Adrenal gland (tissue), 19 donors: ENCODE measurements at regions of chr6 and their contacts with region 1.

Region 1: DNA sequence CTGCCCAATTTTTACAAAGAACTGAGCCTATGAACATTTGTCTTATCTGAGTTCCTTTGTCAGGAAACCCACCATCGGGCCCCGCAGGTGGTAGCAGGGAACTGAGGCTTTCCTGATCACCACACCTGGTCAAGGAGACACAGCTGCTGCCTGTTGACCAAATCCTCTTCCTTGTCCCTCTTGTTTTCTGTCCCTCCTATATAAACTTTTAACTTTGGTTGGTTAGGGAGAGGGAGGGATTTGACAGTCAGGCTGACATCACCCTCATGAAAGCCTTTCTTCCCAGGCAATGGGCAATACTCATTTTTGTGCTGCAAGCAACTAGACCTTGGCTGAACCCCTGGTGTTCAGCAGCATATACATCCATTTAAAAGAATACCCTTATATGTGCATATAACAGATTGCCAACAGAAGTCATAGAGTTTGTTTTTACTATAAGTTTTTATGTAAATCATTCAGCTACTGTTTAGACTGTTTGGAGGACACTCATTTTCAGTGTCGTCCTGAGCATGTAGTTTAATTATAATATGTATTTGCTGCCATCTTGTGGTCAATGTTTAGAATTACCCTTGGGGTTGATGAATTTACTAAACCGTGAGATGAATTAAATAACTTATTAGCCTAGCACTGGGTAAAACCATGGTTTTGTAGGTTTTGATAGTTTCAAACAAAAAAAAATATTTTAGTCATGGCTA is 17.0 kb downstream of the CRISP1 start:
- DNase-seq: no peak
- H3K4me3 ChIP-seq: no peak overlapping the region
- H3K27ac ChIP-seq: no peak overlapping the region
- H3K4me1 ChIP-seq: no peaks in the 10 kb centered on the region
- H3K27me3 ChIP-seq: peaks cover 4% of the 10 kb centered on the region
- CTCF ChIP-seq: peak; percentile 54 to 72 (median 64)
- POLR2A ChIP-seq: no peak

Region 2: DNA sequence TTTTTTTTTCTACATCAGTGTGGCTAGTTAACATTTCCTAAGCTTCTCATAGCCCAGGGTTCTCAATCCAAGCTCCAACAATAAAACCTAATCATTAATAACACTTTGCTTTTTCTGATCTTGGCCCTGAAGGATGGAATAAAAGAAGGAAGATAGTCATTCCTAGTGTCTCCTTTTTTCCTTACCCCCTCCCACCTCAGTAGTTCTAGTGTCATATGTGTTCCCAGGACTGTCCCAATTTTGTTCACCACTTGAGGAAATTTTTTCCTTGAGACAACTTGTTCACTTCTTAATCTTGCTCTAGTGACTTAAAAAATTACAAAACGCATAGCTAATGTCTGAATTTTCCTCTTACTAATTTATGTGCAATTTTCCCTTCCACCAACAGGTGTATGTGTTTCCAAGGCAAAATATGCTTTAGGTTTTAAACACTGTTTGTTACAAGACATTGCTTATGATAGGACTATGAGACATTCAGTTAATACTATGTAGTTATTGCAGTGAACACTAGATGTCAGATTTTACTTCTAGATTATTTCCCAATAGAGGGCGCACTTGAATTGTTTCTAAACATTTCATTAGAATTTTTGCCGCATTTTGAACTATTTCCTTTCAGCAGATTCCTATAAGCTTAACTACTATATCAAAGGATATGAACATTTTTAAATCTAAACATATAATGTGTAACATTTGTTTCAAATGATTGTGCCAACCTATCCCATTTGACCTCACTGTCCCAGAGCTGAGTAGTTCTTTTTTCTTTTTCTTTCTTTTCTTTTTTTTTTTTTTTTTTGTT is 317.4 kb before region 1 on chr6:
- intact Hi-C with region 1: loop called in 1 of 2 experiments (anchors 10 kb)
- DNase-seq: no peak
- H3K4me3 ChIP-seq: peak overlapping the region in 1 of 4 donors; percentile 4
- H3K27ac ChIP-seq: no peak overlapping the region
- H3K4me1 ChIP-seq: peaks cover 0 to 5% of the 10 kb centered on the region in 2 donors
- H3K27me3 ChIP-seq: no peaks in the 10 kb centered on the region
- CTCF ChIP-seq: peak; percentile 69 to 94 (median 74)
- POLR2A ChIP-seq: no peak

Region 3: DNA sequence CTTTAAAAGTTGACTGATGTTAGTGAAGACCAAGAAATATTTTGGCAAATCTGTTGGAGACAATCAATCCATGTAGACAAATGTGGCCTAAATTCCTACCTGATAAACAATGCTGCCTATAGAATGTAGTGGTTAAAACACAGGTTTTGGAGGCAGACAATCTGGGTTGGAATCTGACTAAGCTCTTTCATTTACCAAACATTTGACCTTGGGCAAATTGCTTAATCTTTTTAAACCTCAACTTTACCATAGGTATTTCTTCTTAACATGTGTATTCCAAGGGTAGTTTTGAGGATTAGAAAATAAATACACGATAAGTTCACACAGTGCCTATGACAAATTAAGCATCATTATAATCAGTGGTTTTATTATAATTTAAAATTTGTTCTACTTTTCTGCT is 224.2 kb before region 1 on chr6:
- intact Hi-C with region 1: loop called (anchors 5 kb)
- DNase-seq: no peak
- H3K4me3 ChIP-seq: no peak overlapping the region
- H3K27ac ChIP-seq: no peak overlapping the region
- H3K4me1 ChIP-seq: no peaks in the 10 kb centered on the region
- H3K27me3 ChIP-seq: no peaks in the 10 kb centered on the region
- CTCF ChIP-seq: no peak
- POLR2A ChIP-seq: no peak